ENCODE measurements at regions of chr2 and their contacts with region 1.

Region 1: DNA sequence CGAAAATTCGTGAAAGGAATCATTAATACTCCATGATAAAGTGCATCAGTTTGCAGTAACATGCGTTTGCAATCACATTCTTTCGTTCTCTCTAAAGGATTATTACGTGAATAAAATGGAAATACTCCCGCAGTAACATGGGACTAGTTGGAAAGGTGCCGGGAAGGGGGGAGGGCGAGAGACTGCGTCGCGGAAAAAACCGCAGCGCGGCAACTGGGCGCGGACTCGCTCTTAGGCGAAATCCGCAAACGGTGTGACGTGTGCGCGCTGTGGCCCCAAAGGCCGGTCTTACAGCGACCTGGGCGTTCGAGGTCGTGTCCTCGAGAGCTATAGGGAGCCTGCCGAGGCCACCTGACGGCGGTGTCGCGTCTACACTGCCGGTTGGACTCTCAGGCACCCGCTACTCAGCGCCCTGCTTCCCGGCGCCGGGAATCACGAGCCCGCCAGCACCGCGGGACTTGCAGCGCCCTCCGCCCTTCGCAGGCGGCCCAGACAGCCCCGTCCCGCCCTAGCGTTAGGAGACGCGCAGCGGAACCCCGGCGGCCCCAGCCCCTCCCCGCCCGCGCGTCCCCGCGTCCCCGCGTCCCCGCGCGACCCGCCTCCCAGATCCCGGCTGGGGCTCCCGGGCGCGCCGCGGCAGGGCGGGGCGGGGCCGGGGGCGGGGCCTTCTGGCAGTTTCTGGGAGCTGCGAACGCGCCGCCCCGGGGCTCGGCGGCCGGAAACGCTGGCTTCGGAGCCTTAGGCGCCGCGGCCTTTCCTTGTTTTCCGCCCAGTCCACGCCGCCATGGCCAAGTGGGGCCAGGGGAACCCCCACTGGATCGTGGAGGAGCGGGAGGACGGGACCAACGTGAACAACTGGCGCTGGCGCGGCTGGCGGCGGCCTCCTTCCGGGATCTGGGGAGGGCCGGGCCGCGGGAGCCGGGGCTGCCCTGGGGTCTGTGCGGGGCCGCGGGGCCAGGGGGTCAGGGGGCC is 15.1 kb downstream of the C2orf74 start:
- DNase-seq: peak; percentile 94
- H3K4me3 Mint-ChIP-seq: peak overlapping the region; percentile 78
- H3K27ac Mint-ChIP-seq: peak overlapping the region; percentile 79
- H3K4me1 Mint-ChIP-seq: peaks cover 48% of the 10 kb centered on the region
- H3K27me3 Mint-ChIP-seq: no peaks in the 10 kb centered on the region

Region 2: GRCh38 chr2:60881047-60881932 is 295.8 kb before region 1 on chr2 and contains the start of gene REL:
- CTCF ChIA-PET with region 1: no interaction called
- intact Hi-C with region 1: loop called (anchors 1 kb)
- DNase-seq: peak; percentile 94
- H3K4me3 Mint-ChIP-seq: peak within 1 kb of the TSS; percentile 100
- H3K27ac Mint-ChIP-seq: peak within 1 kb of the TSS; percentile 98
- H3K4me1 Mint-ChIP-seq: peaks cover 21% of the 10 kb centered on the region
- H3K27me3 Mint-ChIP-seq: no peaks in the 10 kb centered on the region
- total RNA-seq, gene REL: 40.3 to 40.5 TPM

Region 3: GRCh38 chr2:61144697-61145268 is 32.3 kb before region 1 on chr2:
- CTCF ChIA-PET with region 1: interaction called, 6 read pairs
- intact Hi-C with region 1: loop called (anchors 1 kb)
- DNase-seq: peak; percentile 97
- H3K4me3 Mint-ChIP-seq: peak overlapping the region; percentile 92
- H3K27ac Mint-ChIP-seq: peak overlapping the region; percentile 85
- H3K4me1 Mint-ChIP-seq: peaks cover 6% of the 10 kb centered on the region
- H3K27me3 Mint-ChIP-seq: no peaks in the 10 kb centered on the region

Region 4: GRCh38 chr2:61187085-61187484 is 10.0 kb after region 1 on chr2:
- CTCF ChIA-PET with region 1: no interaction called
- intact Hi-C with region 1: no loop called
- DNase-seq: no peak
- H3K4me3 Mint-ChIP-seq: no peak overlapping the region
- H3K27ac Mint-ChIP-seq: peak overlapping the region; percentile 33
- H3K4me1 Mint-ChIP-seq: peaks cover 44% of the 10 kb centered on the region
- H3K27me3 Mint-ChIP-seq: no peaks in the 10 kb centered on the region

Region 5: GRCh38 chr2:61670591-61671501 is 493.8 kb after region 1 on chr2:
- CTCF ChIA-PET with region 1: no interaction called
- intact Hi-C with region 1: loop called (anchors 5 kb)
- DNase-seq: peak; percentile 51
- H3K4me3 Mint-ChIP-seq: peak overlapping the region; percentile 10
- H3K27ac Mint-ChIP-seq: peak overlapping the region; percentile 57
- H3K4me1 Mint-ChIP-seq: peaks cover 17% of the 10 kb centered on the region
- H3K27me3 Mint-ChIP-seq: no peaks in the 10 kb centered on the region

Region 6: GRCh38 chr2:61888267-61889055 is 711.4 kb after region 1 on chr2 and contains the start of gene CCT4:
- CTCF ChIA-PET with region 1: no interaction called
- intact Hi-C with region 1: loop called (anchors 1 kb)
- DNase-seq: peak; percentile 86
- H3K4me3 Mint-ChIP-seq: peak within 1 kb of the TSS; percentile 99
- H3K27ac Mint-ChIP-seq: peak within 1 kb of the TSS; percentile 98
- H3K4me1 Mint-ChIP-seq: peaks cover 34% of the 10 kb centered on the region
- H3K27me3 Mint-ChIP-seq: no peaks in the 10 kb centered on the region
- total RNA-seq, gene CCT4: 363 to 377 TPM